SK-N-SH (cell line): ENCODE measurements at regions of chr17 and their contacts with region 1.

Region 1: GRCh38 chr17:57597531-57598453 is 147.3 kb downstream of the CCDC182 start:
- DNase-seq: peak; percentile 82
- H3K4me3 ChIP-seq: no peak overlapping the region; a peak in 1 of 4 replicates
- H3K27ac ChIP-seq: peak overlapping the region; percentile 48 to 99
- H3K4me1 ChIP-seq: peaks cover 5 to 87% of the 10 kb centered on the region in 2 experiments; a peak in 3 of 4 replicates
- H3K27me3 ChIP-seq: no peaks in the 10 kb centered on the region
- CTCF ChIP-seq: peak; percentile 99
- EP300 ChIP-seq: peak; percentile 46 to 99; a peak in 2 of 4 replicates
- RAD21 ChIP-seq: peak; percentile 87

Region 2: DNA sequence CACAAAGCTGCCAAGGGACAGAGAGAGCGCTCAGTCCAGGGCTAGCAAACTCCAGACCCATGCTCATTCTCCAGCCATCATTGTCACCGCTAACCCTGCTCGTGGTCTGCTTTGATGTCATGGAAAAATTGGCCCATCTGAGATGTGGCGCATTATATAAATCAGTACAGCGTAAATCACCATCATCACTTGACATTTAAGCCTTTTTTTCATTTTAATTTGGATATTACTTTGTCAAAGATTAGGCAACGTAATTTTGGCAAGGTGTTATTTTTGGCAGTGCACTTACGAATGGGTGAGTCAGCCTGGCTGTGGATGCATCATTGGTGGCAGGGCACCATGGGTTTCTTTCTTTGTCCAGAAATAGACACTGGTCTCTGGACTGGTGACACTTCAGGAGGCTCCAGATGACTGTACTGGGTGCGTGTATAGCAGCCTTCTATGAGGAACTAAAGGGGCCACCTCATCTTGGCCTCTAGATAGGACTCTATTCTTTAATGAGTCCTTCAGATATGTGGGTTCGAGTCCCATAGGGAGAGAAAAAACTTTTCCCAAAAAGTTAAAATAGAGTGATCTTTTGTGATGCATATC is 175.1 kb before region 1 on chr17:
- CTCF ChIA-PET with region 1: interaction called, 13 read pairs
- POLR2A ChIA-PET with region 1: interaction called, 3 read pairs
- DNase-seq: no peak
- H3K4me3 ChIP-seq: no peak overlapping the region
- H3K27ac ChIP-seq: peak overlapping the region; percentile 11 to 84
- H3K4me1 ChIP-seq: peaks cover 37 to 74% of the 10 kb centered on the region in 2 experiments
- H3K27me3 ChIP-seq: no peaks in the 10 kb centered on the region
- CTCF ChIP-seq: no peak
- EP300 ChIP-seq: no peak
- RAD21 ChIP-seq: no peak

Region 3: DNA sequence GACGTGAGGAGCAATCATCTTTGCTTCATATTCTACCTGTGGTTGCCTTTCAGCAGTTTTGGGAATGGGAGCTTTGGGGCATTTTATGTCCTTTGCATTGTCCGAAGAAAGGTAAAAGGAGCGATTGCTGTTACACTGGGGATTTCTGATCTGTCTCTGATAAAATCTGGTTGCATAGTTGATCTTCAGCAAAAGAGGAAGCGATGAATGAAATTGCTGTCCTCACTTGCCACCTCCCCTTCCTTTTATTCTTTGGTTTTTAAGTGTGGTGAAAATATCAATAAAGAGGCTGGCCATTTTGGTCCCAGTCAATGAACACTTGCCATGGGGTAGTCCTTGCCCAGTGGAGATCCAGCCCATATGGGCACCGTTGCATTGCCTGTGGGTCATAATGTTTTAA is 104.6 kb before region 1 on chr17:
- CTCF ChIA-PET with region 1: no interaction called
- POLR2A ChIA-PET with region 1: no interaction called
- DNase-seq: no peak
- H3K4me3 ChIP-seq: no peak overlapping the region
- H3K27ac ChIP-seq: no peak overlapping the region; a peak in 1 of 4 replicates
- H3K4me1 ChIP-seq: peaks cover 0 to 48% of the 10 kb centered on the region in 2 experiments; a peak in 1 of 4 replicates
- H3K27me3 ChIP-seq: no peaks in the 10 kb centered on the region
- CTCF ChIP-seq: no peak
- EP300 ChIP-seq: no peak
- RAD21 ChIP-seq: no peak

Region 4: GRCh38 chr17:57552114-57552624 is 45.6 kb before region 1 on chr17:
- CTCF ChIA-PET with region 1: interaction called, 83 read pairs
- POLR2A ChIA-PET with region 1: interaction called, 5 read pairs
- DNase-seq: peak; percentile 84
- H3K4me3 ChIP-seq: no peak overlapping the region
- H3K27ac ChIP-seq: peak overlapping the region in 1 of 2 experiments; percentile 99; a peak in 2 of 4 replicates
- H3K4me1 ChIP-seq: peaks cover 6 to 86% of the 10 kb centered on the region in 2 experiments; a peak in 2 of 4 replicates
- H3K27me3 ChIP-seq: no peaks in the 10 kb centered on the region
- CTCF ChIP-seq: peak; percentile 52
- EP300 ChIP-seq: peak in 1 of 2 experiments; percentile 61; a peak in 1 of 4 replicates
- RAD21 ChIP-seq: peak; percentile 65

Region 5: GRCh38 chr17:57584050-57584551 is 13.7 kb before region 1 on chr17:
- CTCF ChIA-PET with region 1: interaction called, 109 read pairs
- POLR2A ChIA-PET with region 1: interaction called, 42 read pairs
- DNase-seq: peak; percentile 83
- H3K4me3 ChIP-seq: no peak overlapping the region
- H3K27ac ChIP-seq: peak overlapping the region in 1 of 2 experiments; percentile 100; a peak in 2 of 4 replicates
- H3K4me1 ChIP-seq: peaks cover 13 to 89% of the 10 kb centered on the region in 2 experiments; a peak in 3 of 4 replicates
- H3K27me3 ChIP-seq: no peaks in the 10 kb centered on the region
- CTCF ChIP-seq: no peak
- EP300 ChIP-seq: peak in 1 of 2 experiments; percentile 86; a peak in 1 of 4 replicates
- RAD21 ChIP-seq: peak; percentile 47; the same call in 1 of the 2 replicates

Region 6: DNA sequence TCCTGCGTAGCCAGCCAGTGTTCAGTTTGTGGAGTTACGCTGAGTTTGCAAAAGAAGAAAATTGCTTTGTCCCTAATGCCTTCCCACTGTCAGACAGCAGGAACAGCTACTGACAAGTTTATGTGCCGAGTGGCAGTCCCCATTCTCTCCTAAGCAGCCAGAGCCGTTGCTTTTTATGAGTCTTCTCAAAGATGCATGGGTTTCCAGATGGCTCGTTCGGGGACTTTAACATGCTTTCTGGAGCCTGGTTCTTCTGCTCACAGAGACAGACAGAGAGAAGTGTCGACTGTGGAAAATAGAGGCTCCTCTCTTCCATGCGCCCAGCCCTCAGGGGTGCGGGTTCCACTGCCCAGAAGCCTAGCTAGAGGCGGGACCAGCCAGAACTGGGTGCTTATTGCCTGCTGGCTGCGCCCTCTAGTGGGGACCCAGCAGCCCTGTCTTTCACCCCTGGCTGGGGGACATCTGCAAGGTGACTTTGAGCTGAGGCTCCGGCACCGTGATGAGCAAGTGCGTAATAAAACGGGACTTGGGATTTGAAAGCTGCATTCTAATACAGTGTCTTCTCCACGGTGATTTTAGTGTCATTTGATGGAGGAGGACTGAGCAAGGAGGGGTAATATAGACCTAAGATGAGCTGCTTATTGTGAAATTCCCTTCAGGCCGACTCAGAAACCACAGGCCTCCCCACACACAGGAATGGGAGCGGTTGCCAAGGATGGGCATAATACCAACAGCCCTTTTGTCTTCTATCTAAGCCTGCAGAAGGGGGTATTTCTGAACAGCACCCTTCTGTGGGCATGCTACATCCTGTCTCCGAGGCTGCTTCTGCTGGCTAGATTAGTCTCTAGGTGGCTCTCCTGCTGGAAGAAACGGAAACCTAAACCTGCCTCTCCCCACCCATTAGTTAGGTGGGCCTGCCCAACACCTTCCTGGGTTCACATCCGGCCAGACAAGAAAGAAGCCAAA is 74.2 kb after region 1 on chr17:
- CTCF ChIA-PET with region 1: interaction called, 298 read pairs
- POLR2A ChIA-PET with region 1: interaction called, 8 read pairs
- DNase-seq: peak; percentile 94
- H3K4me3 ChIP-seq: peak overlapping the region in 1 of 2 experiments; percentile 9; a peak in 1 of 4 replicates
- H3K27ac ChIP-seq: peak overlapping the region; percentile 5 to 100; a peak in 3 of 4 replicates
- H3K4me1 ChIP-seq: peaks cover 11 to 74% of the 10 kb centered on the region in 2 experiments; a peak in 3 of 4 replicates
- H3K27me3 ChIP-seq: no peaks in the 10 kb centered on the region
- CTCF ChIP-seq: peak; percentile 100
- EP300 ChIP-seq: peak; percentile 32 to 73; a peak in 3 of 4 replicates
- RAD21 ChIP-seq: peak; percentile 95

Region 7: DNA sequence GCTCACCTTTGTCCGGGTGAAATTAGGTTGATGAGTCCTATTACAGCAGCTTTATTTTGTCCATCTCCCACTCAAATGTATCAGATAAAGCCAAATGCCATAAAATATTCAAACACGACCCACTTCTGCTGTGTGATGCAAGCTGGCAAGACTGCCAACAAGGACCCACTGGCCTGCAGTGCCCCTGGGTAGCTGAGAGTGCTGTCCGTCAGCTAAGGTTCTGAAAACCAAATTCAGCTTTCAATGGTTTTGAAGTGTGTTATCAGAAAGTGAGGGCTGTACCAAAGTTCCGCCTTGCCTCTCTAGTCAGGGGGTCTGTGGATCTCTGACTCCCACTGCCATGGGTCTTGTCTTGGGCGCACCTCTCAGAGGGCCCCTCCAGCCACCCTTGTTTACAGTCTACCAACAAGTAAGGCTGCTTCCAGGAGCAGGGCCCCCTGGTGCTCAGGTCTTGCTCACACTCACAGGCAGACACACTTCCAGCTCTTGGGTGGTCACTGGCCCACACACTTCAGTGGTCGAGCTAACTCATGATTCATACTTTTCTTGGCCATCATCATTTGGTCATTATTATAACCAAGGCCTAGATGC is 157.8 kb after region 1 on chr17:
- CTCF ChIA-PET with region 1: interaction called, 117 read pairs
- POLR2A ChIA-PET with region 1: interaction called, 5 read pairs
- DNase-seq: no peak
- H3K4me3 ChIP-seq: no peak overlapping the region
- H3K27ac ChIP-seq: peak overlapping the region in 1 of 2 experiments; percentile 44; a peak in 1 of 4 replicates
- H3K4me1 ChIP-seq: peaks cover 0 to 51% of the 10 kb centered on the region in 2 experiments; a peak in 2 of 4 replicates
- H3K27me3 ChIP-seq: peaks cover 7% of the 10 kb centered on the region; the same call in 1 of the 2 replicates
- CTCF ChIP-seq: no peak
- EP300 ChIP-seq: no peak
- RAD21 ChIP-seq: no peak